ENCODE measurements at regions of chr17 and their contacts with region 1.

Region 1: GRCh38 chr17:28335201-28335955 is at the starts of genes IFT20 and TNFAIP1:
- DNase-seq: peak; percentile 99
- H3K4me3 ChIP-seq: peak within 1 kb of the TSS; percentile 87
- H3K27ac ChIP-seq: peak within 1 kb of the TSS; percentile 76
- H3K4me1 ChIP-seq: peaks cover 22% of the 10 kb centered on the region
- H3K27me3 ChIP-seq: no peaks in the 10 kb centered on the region
- CTCF ChIP-seq: no peak
- total RNA-seq, gene IFT20: 35.3 and 42.3 TPM in 2 replicates
- total RNA-seq, gene TNFAIP1: 46.8 and 48.8 TPM in 2 replicates

Region 2: DNA sequence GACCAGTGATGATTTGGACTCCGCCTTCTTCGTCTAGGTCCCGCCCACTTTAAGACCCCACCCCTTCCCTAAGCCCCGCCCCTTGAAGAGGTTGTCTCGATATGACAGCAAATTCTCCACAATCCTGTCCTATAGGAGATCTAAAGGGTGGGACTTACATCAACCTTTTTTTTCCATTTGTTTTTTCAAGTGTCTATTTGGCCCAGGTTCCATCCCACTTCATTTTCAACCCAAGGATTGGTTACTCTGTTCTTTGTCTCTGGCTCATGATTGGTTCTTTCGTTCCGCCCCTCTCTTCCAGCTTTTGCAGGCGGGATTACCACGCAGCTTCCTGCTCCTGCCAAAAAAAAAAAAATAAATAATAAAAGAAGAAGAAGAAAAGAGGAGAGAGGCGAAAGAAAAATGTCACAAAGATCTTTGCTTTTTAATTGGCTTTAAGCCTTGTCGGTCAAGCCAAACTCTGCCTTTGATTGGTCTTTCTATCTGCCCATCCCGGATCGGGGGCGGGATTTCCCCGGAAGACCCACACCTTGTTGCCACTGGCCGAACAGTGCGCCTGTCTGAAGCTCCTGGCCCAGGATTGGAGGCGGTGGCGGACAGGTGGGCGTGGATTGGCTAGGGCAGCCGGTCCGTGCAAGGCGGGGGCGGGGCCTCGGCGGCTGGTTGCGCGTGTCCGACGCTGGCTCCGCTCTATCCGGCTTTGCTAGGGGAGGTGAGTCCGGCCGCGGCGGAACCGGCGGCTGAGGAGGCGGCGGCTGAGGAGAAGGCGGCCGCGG is 294.1 kb before region 1 on chr17:
- CTCF ChIA-PET with region 1: no interaction called
- POLR2A ChIA-PET with region 1: no interaction called
- intact Hi-C with region 1: loop called (anchors 5 kb)
- DNase-seq: peak; percentile 98 to 99
- H3K4me3 ChIP-seq: peak overlapping the region; percentile 76
- H3K27ac ChIP-seq: no peak overlapping the region
- H3K4me1 ChIP-seq: peaks cover 29% of the 10 kb centered on the region
- H3K27me3 ChIP-seq: no peaks in the 10 kb centered on the region
- CTCF ChIP-seq: no peak

Region 3: DNA sequence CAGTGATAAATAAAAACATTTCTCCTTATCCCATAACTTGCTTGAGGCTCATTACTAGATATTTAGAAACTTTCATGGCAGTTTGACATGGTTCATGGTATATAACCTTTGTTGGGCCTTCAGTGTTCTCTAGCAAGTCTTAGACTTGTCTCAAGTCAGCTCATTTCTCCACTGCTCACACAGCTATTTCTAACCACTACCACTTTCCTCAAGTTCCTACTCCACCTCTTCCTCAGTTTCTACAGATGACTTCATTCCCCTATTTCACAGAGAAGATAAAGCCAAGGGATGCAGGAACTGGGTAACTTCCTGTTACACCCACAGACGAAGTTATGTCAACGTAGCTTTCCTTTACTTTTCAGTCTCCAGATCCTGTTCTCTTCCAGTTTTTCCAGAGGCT is 269.7 kb before region 1 on chr17:
- CTCF ChIA-PET with region 1: no interaction called
- POLR2A ChIA-PET with region 1: no interaction called
- intact Hi-C with region 1: no loop called
- DNase-seq: no peak
- H3K4me3 ChIP-seq: no peak overlapping the region
- H3K27ac ChIP-seq: no peak overlapping the region
- H3K4me1 ChIP-seq: no peaks in the 10 kb centered on the region
- H3K27me3 ChIP-seq: no peaks in the 10 kb centered on the region
- CTCF ChIP-seq: no peak

Region 4: GRCh38 chr17:28180449-28180848 is 154.9 kb before region 1 on chr17:
- CTCF ChIA-PET with region 1: no interaction called
- POLR2A ChIA-PET with region 1: no interaction called
- intact Hi-C with region 1: no loop called
- DNase-seq: no peak
- H3K4me3 ChIP-seq: no peak overlapping the region
- H3K27ac ChIP-seq: no peak overlapping the region
- H3K4me1 ChIP-seq: no peaks in the 10 kb centered on the region
- H3K27me3 ChIP-seq: no peaks in the 10 kb centered on the region
- CTCF ChIP-seq: no peak

Region 5: GRCh38 chr17:28282596-28282995 is 52.8 kb before region 1 on chr17:
- CTCF ChIA-PET with region 1: no interaction called
- POLR2A ChIA-PET with region 1: no interaction called
- intact Hi-C with region 1: loop called (anchors 5 kb)
- DNase-seq: peak; percentile 25 to 47
- H3K4me3 ChIP-seq: no peak overlapping the region
- H3K27ac ChIP-seq: no peak overlapping the region
- H3K4me1 ChIP-seq: peaks cover 30% of the 10 kb centered on the region
- H3K27me3 ChIP-seq: no peaks in the 10 kb centered on the region
- CTCF ChIP-seq: no peak

Region 6: DNA sequence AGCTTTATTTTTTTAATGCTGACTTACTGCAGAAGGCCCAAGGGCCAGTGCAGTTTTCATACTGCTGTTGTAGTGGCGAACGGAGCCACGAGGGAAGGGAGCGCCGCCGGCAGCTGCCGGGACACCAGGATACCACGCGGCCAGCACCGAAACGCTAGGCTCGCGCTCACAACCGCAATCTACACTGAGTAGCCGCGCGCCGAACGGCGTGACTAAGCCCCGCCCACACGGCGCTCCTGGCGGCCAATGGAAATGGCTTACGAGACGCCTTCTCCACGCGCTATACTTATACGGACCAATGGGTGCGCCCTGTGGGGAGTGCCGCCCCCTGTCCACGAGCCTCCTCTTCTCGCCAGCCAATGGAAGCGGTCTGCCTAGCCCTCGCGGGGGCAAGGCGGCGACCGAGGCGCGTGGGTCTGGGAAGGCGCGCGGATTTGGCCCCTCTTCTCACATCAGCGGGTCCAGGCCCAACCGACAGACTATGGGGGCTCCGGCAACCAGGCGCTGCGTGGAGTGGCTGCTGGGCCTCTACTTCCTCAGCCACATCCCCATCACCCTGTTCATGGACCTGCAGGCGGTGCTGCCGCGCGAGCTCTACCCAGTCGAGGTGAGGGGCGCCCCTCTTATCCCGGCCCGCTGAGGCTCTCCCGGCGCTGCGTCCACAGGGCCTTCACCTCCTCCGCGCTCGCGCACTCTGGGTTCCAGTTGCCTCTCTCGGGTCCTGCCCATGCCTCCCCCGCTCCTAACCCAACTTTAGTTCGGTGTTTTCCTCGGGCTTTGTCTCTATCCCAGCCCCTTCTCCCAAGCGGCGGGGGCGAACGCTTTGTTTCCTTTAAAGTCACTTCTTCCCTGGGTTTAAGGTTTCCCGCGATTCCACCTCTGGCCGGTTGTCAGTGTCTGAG is 16.4 kb before region 1 on chr17 and contains the start of gene TMEM97:
- CTCF ChIA-PET with region 1: interaction called, 4 read pairs
- POLR2A ChIA-PET with region 1: no interaction called
- intact Hi-C with region 1: loop called (anchors 1 kb)
- DNase-seq: peak; percentile 93
- H3K4me3 ChIP-seq: peak within 1 kb of the TSS; percentile 75
- H3K27ac ChIP-seq: no peak within 1 kb of the TSS
- H3K4me1 ChIP-seq: peaks cover 34% of the 10 kb centered on the region
- H3K27me3 ChIP-seq: no peaks in the 10 kb centered on the region
- CTCF ChIP-seq: 0 out of 2 replicates have a peak, but pooled peaks have one; percentile 34
- total RNA-seq, gene TMEM97: 28.8 and 46.4 TPM in 2 replicates

Region 7: DNA sequence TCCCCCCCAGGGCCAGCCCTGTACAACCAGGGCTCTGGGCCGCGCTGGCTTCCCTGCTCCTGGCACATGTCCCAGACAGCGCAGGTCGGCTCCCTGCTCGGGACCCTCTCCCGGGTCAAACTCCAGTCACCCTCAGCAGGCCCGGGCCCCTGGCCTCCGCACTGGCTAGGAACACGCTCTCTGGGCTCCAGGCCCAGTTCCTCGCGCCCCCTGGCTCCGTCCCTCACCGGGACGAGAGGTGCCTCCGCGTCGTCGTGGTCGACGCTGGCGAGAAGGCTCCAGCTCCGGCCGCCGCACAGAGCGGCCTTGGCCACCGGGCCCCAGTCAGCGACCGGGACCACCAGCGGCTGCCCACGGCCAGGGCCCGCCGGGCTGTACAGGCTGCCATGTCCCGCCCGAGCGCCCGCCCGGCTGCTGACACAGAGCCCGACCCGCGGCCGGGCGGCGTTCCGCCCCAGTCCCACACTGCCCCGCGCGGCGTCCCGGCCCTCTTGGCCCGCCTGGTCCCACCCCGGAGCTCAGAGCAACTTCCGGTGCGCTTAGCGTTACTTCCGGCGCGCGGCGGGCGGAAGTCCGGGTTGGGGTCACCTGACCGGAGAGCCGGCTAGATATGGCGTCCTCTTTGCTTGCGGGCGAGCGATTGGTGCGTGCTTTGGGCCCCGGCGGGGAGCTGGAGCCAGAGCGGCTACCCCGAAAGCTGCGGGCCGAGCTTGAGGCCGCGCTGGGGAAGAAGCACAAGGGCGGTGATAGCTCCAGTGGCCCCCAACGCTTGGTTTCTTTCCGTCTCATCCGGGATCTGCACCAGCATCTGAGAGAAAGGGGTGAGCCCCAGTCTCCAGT is 21.9 kb after region 1 on chr17 and contains the start of gene POLDIP2:
- CTCF ChIA-PET with region 1: no interaction called
- POLR2A ChIA-PET with region 1: interaction called, 24 read pairs
- intact Hi-C with region 1: loop called (anchors 1 kb)
- DNase-seq: peak; percentile 87 to 94
- H3K4me3 ChIP-seq: peak within 1 kb of the TSS; percentile 84
- H3K27ac ChIP-seq: peak within 1 kb of the TSS; percentile 23; the same call in 1 of the 2 replicates
- H3K4me1 ChIP-seq: peaks cover 19% of the 10 kb centered on the region
- H3K27me3 ChIP-seq: no peaks in the 10 kb centered on the region
- CTCF ChIP-seq: no peak
- total RNA-seq, gene POLDIP2: 84.5 and 98.2 TPM in 2 replicates

Region 8: DNA sequence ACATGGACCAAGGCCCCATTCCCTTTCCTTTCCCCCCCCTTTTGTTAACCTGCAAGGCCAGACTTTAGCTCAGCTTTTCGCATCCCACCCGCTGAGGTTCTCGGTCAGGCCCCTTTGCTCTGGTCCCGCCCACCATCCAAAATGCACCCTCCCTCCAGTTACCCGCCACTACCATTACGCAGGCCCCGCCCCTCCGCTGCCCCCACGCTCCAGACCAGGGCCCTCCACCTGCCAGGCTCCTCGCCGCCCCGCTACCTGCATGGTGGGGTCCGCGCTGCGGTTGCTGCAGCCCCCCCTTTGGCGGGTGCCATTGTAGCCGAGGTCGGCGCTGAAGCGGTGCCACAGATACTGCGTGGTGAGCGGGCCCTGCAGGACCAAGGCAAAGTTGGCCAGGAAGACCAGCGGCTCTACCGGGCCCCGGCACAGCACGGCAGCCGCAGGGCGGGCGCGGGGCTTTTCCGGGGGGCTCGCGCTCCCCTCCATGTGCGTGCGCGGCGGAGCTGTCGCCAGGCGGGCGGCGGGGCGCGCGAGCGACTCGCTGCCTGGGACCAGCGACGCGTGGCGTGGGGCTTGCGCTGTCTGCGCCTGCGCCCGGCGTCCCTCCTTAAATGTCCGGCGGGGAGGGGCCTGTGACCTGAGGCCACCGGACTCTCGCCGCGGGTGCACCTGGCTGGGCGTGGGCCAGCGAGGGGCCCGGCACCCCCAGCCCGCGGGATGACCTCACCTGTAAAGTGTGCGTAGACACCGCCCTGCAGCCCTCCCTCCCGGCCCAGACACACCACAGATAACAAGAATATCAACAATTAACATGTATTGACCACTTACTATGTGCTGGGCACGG is 70.5 kb after region 1 on chr17 and contains the start of gene SLC46A1:
- CTCF ChIA-PET with region 1: no interaction called
- POLR2A ChIA-PET with region 1: interaction called, 4 read pairs
- intact Hi-C with region 1: loop called (anchors 5 kb)
- DNase-seq: peak; percentile 55 to 73
- H3K4me3 ChIP-seq: peak within 1 kb of the TSS; percentile 99
- H3K27ac ChIP-seq: no peak within 1 kb of the TSS
- H3K4me1 ChIP-seq: peaks cover 11% of the 10 kb centered on the region
- H3K27me3 ChIP-seq: no peaks in the 10 kb centered on the region
- CTCF ChIP-seq: no peak
- total RNA-seq, gene SLC46A1: 12.6 and 14.9 TPM in 2 replicates